ENCODE measurements at regions of chr16 and their contacts with region 1.

Region 1: GRCh38 chr16:4330277-4330874 is 14.5 kb downstream of the GLIS2 start:
- H3K4me3 ChIP-seq: no peak overlapping the region
- H3K27ac ChIP-seq: no peak overlapping the region
- H3K4me1 ChIP-seq: no peaks in the 10 kb centered on the region
- CTCF ChIP-seq: peak; percentile 60

Region 2: GRCh38 chr16:4288148-4288921 is 42.0 kb before region 1 on chr16:
- CTCF ChIA-PET with region 1: interaction called, 63 read pairs
- POLR2A ChIA-PET with region 1: interaction called, 7 read pairs
- H3K4me3 ChIP-seq: no peak overlapping the region; the same call in 1 of the 2 replicates
- H3K27ac ChIP-seq: no peak overlapping the region
- H3K4me1 ChIP-seq: no peaks in the 10 kb centered on the region
- CTCF ChIP-seq: peak; percentile 92

Region 3: DNA sequence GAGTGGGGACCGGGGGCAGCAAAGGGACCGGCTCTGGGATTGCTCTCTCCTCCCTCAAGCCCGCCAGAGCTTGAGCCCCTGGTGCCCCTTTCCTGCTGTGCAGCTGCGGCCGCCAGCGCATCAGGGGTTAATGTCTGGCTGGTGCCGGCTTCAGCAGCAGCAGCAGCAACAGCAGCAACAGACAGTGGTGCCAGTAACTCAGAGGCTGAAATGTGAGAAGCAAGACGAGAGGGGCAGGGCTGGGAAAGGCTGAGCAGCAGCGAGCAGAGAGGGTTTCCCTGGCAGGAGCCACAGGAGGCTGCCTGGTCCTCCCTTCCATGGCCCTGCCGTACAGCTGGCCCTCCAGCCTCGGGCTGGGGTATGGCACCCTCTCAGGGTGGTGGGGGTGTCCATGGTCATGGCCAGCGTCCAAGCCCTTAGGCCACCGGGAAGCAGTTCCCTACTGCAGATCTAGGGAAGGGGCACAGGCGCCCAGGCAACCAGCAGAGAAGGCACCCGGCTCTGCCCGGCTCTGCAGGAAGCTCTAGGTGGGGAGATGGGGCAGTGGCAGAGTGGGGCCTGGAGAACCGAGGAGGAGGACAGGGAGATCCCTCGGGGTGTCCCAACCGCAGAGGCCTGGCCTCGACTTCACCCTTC is 36.4 kb before region 1 on chr16:
- CTCF ChIA-PET with region 1: interaction called, 63 read pairs
- POLR2A ChIA-PET with region 1: interaction called, 7 read pairs
- H3K4me3 ChIP-seq: no peak overlapping the region
- H3K27ac ChIP-seq: no peak overlapping the region
- H3K4me1 ChIP-seq: peaks cover 4% of the 10 kb centered on the region; the same call in 1 of the 2 replicates
- CTCF ChIP-seq: no peak

Measured in HEK293 (cell line).